Activated CD4-positive, alpha-beta T cell treated with anti-CD3 and anti-CD28 coated beads, Interleukin-2, amount 10 ng/mL, durations not matched to agents 24 days and 14 days (primary cell): ENCODE measurements at regions of chr19 and their contacts with region 1.

Region 1: GRCh38 chr19:35899547-35900214 is 659 bp downstream of the NFKBID start:
- DNase-seq: peak; percentile 96
- H3K4me3 Mint-ChIP-seq: peak overlapping the region; percentile 98
- H3K27ac Mint-ChIP-seq: peak overlapping the region; percentile 98
- H3K4me1 Mint-ChIP-seq: peaks cover 50% of the 10 kb centered on the region
- H3K27me3 Mint-ChIP-seq: no peaks in the 10 kb centered on the region

Region 2: DNA sequence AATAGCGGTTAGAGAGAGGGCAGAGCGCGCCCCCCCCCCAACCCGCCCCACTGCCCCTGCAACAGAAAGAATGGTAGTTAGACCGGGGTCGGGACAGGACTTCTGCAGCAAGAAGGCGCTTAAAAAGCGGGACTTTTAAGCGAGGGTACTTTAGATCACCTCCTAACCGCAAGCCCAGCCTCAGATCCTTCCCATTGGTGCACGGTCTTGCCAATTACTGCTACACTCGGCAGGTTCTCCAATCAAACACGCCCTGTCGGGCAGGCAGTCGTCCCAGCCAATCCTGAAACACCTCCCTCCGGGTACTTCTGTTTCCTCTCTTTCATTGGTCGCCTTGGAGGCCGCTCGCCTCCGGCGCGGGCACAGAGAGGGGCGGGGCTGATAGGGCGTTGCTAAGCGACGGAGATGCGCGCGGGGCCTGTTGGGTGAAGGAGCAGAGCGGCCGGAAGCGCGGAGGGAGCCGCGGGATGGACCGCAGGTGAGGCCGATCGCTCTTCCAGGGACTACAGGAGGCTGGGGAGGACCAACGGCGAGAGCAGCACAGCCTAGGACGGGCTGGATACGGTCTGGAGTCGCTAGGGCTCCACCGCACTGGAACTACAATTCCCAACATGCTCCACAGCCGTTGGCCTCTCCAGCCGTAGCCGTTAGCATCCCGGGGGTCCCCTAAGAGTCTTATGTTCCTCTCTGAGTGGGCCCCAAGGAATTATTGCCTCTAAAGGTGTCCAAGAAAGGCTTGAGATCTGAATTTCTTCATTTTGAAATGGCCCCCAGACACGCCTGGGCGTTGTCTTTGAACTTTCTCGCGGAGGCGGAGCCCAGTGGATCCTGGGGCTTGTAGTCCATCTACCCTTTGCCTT is 141.7 kb before region 1 on chr19 and contains the start of gene PROSER3:
- intact Hi-C with region 1: loop called (anchors 5 kb)
- DNase-seq: peak; percentile 100
- H3K4me3 Mint-ChIP-seq: peak within 1 kb of the TSS; percentile 95
- H3K27ac Mint-ChIP-seq: peak within 1 kb of the TSS; percentile 98
- H3K4me1 Mint-ChIP-seq: peaks cover 25% of the 10 kb centered on the region
- H3K27me3 Mint-ChIP-seq: peaks cover 2% of the 10 kb centered on the region
- total RNA-seq, gene PROSER3: 35.2 and 43.6 TPM in 2 replicates

Region 3: GRCh38 chr19:35790981-35791813 is 108.5 kb before region 1 on chr19:
- intact Hi-C with region 1: no loop called
- DNase-seq: peak; percentile 69
- H3K4me3 Mint-ChIP-seq: no peak overlapping the region
- H3K27ac Mint-ChIP-seq: no peak overlapping the region
- H3K4me1 Mint-ChIP-seq: no peaks in the 10 kb centered on the region
- H3K27me3 Mint-ChIP-seq: peaks cover 10% of the 10 kb centered on the region

Region 4: GRCh38 chr19:35869327-35870123 is 30.2 kb before region 1 on chr19:
- intact Hi-C with region 1: loop called (anchors 1 kb)
- DNase-seq: peak; percentile 96
- H3K4me3 Mint-ChIP-seq: peak overlapping the region; percentile 94
- H3K27ac Mint-ChIP-seq: peak overlapping the region; percentile 56
- H3K4me1 Mint-ChIP-seq: peaks cover 18% of the 10 kb centered on the region
- H3K27me3 Mint-ChIP-seq: peaks cover 25% of the 10 kb centered on the region

Region 5: DNA sequence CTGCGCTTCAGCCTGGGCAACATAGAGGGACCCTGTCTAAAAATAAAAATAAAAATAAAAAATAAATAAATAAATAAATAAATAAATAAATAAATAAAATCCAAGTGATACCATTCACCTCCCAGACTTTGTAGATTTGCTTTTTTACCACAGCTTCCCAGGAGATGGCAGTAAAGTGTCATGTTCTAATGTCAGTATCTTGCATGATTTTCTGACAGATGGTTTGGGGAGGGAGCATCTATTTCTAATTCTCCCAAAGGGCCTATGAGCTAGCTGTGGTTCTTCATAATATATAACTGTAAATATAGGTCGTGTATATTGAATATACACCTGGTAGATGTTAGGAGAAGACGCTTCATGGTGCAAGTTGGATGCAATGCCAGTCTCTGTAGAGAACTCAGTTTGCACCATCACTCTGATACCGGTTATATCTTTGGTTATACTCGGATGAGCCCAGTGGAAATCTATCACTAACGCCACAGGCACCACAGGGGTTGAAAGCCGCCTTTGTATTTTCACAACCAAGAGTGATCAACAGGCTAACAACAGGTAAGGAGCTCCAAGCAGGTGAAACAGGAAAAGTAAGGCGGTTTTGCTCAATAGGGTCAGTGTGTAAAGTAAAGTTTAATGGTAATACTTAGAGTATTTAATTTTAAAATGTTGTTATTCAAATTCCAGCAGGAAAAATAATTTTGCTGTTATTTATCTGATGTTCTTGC is 17.4 kb before region 1 on chr19:
- intact Hi-C with region 1: loop called (anchors 2 kb)
- DNase-seq: peak; percentile 87
- H3K4me3 Mint-ChIP-seq: no peak overlapping the region
- H3K27ac Mint-ChIP-seq: no peak overlapping the region
- H3K4me1 Mint-ChIP-seq: peaks cover 10% of the 10 kb centered on the region
- H3K27me3 Mint-ChIP-seq: peaks cover 8% of the 10 kb centered on the region

Region 6: DNA sequence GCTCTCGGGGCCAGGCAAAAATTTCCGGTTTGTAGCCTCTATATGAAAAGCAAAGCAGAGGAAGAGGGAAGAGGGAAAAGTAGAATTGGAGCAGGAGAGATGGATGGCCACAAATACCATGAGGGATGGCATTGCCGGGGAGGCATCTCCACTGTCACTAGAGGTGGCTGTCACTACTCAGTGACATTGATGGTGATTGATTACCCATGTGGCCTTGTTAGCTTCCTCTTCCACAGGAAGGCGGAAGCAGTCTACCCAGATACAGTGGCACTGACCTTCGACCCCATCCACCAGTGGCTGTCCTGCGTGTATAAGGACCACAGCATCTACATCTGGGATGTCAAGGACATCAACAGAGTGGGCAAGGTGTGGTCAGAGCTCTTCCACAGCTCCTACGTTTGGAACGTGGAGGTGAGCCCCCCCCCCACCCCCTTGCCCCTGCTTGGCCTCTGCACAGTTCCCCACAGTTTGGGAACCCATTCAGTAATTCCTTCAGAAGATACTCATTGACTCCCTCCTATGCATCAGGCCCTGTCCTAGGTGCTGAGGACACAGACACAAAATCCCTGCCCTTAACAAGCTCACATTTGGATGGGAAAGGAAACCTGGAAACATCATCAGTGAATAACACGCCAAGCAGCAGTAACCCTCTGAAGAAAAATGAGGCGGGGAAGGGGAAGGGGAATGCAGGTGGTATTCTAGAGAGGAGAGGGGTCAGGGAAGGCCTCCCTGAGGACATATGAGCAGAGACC is 173.6 kb after region 1 on chr19:
- intact Hi-C with region 1: no loop called
- DNase-seq: no peak
- H3K4me3 Mint-ChIP-seq: no peak overlapping the region
- H3K27ac Mint-ChIP-seq: no peak overlapping the region
- H3K4me1 Mint-ChIP-seq: no peaks in the 10 kb centered on the region
- H3K27me3 Mint-ChIP-seq: no peaks in the 10 kb centered on the region